Endothelial cell of umbilical vein (primary cell): ENCODE measurements at regions of chr3 and their contacts with region 1.

Region 1: DNA sequence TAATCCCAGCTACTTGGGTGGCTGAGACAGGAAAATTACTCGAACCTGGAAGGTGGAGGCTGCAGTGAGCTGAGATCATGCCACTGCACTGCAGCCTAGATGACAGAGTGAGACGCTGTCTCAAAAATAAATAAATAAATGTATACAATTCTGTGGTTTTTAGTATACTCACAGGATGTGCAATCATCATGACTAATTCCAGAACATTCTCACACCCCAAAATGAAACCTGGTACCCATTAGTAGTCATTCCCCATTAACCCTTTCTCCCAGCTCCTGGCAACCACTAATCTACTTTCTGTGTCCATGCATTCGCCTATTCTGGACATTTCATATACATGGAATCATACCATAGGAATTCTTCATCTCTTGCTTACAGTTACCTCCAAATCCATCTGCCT is 44.5 kb downstream of the LRRFIP2 start:
- DNase-seq: peak; percentile 39
- H3K4me3 ChIP-seq: no peak overlapping the region
- H3K27ac ChIP-seq: no peak overlapping the region
- H3K4me1 ChIP-seq: peaks cover 37% of the 10 kb centered on the region
- H3K27me3 ChIP-seq: no peaks in the 10 kb centered on the region
- CTCF ChIP-seq: no peak
- POLR2A ChIP-seq: no peak

Region 2: DNA sequence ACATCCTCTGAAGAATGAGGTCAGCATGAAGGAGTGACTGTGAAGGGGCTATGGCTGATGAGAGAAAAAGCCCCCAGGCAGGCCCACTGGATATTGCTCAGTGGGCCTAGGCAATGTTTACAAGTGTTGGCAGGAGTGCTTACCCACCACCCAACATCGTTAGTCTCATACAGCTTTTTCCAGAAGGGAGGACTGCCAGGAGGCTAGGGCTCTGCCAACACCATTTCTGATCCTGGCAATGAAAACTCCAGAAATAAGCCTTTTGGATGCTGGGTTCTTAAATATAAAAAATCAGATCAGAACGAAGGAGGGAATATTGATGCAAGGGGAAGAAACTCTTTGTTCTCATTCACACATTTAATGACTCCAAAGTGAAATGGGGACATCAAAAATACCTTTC is 554.6 kb before region 1 on chr3:
- CTCF ChIA-PET with region 1: no interaction called
- POLR2A ChIA-PET with region 1: no interaction called
- dilution Hi-C with region 1: no loop called
- intact Hi-C with region 1: no loop called
- DNase-seq: no peak
- H3K4me3 ChIP-seq: no peak overlapping the region
- H3K27ac ChIP-seq: no peak overlapping the region
- H3K4me1 ChIP-seq: no peaks in the 10 kb centered on the region
- H3K27me3 ChIP-seq: no peaks in the 10 kb centered on the region
- CTCF ChIP-seq: no peak
- POLR2A ChIP-seq: no peak

Region 3: DNA sequence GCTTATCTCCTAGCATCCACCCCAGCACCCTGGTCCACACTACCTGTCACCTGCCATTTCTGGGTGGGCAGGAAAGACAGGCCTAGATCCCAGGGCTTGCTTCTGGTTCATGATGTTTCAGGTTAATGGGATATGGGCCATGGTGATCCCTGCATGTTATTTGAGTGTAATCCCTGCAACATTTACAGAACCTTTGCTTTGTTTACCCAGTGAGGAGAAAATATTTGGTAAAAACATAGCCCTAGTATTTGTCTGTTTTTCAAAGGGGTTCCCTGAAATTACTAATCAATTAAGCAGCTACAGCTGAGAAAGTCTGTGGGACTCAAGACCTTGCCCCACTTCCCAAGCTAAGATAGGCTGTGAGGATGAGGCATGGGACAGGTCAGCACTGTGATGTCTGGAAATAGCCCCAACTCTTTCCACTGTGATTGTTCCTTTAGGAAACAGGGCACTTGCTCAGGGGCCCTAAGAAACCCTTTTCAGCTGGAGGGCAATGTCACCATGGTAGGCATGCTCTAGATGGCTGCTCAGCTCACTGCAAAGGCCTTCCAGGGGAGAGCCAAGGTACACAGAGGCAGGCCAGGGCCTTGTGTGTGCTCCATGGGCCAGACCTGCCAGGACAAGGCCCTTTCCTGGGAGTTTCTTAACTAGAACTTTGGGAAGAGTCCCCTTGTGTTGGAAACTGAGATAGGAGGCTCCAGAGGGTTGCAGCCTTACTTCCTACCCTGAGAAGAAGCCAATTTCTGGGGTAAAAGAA is 196.2 kb before region 1 on chr3:
- CTCF ChIA-PET with region 1: no interaction called
- POLR2A ChIA-PET with region 1: no interaction called
- dilution Hi-C with region 1: no loop called
- intact Hi-C with region 1: no loop called
- DNase-seq: no peak
- H3K4me3 ChIP-seq: no peak overlapping the region
- H3K27ac ChIP-seq: no peak overlapping the region
- H3K4me1 ChIP-seq: peaks cover 3% of the 10 kb centered on the region
- H3K27me3 ChIP-seq: no peaks in the 10 kb centered on the region
- CTCF ChIP-seq: no peak
- POLR2A ChIP-seq: no peak

Region 4: DNA sequence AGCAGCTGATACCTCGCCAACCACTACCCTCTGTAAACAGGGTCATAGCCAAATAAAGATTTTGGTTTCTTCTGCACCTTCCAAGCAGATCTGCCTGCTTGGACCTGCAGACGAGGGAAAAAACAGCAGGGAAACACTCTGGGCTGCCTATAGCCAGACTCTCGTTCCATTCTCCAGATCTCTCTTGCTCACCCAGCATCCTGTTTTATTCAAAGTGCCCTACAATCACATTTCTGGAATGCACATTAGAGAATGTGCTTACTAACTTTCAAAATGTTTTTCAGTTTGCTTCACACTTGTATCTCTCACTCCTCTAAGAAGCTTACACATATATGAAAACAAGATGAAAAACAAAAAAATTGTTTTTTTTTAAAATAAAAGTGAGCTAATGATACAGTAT is 65.1 kb before region 1 on chr3:
- CTCF ChIA-PET with region 1: no interaction called
- POLR2A ChIA-PET with region 1: no interaction called
- dilution Hi-C with region 1: no loop called
- intact Hi-C with region 1: loop called (anchors 5 kb)
- DNase-seq: no peak
- H3K4me3 ChIP-seq: no peak overlapping the region
- H3K27ac ChIP-seq: no peak overlapping the region
- H3K4me1 ChIP-seq: peaks cover 5% of the 10 kb centered on the region
- H3K27me3 ChIP-seq: no peaks in the 10 kb centered on the region
- CTCF ChIP-seq: no peak
- POLR2A ChIP-seq: no peak

Region 5: DNA sequence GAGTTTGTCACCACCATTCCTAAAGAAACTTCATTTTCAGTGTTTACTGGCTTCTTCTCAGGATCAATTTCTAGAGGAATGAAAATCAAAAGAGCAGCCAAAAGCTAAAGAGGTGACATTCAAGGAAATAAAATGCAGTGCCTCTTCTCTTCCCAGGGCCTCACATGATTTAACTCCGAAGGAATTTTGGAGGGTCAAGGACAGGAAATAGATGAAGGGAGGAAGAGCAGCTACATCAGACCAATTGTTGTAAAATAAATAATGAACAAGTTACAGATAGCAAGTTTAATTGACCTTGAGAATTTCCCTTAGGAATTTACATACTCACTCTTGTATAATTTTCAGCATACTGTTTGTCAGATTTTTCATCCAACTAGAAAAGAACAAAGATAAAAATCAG is 33.6 kb before region 1 on chr3:
- CTCF ChIA-PET with region 1: no interaction called
- POLR2A ChIA-PET with region 1: interaction called, 3 read pairs
- dilution Hi-C with region 1: no loop called
- intact Hi-C with region 1: loop called (anchors 5 kb)
- DNase-seq: peak; percentile 76
- H3K4me3 ChIP-seq: no peak overlapping the region
- H3K27ac ChIP-seq: peak overlapping the region; percentile 55
- H3K4me1 ChIP-seq: peaks cover 37% of the 10 kb centered on the region
- H3K27me3 ChIP-seq: no peaks in the 10 kb centered on the region
- CTCF ChIP-seq: no peak
- POLR2A ChIP-seq: no peak

Region 6: DNA sequence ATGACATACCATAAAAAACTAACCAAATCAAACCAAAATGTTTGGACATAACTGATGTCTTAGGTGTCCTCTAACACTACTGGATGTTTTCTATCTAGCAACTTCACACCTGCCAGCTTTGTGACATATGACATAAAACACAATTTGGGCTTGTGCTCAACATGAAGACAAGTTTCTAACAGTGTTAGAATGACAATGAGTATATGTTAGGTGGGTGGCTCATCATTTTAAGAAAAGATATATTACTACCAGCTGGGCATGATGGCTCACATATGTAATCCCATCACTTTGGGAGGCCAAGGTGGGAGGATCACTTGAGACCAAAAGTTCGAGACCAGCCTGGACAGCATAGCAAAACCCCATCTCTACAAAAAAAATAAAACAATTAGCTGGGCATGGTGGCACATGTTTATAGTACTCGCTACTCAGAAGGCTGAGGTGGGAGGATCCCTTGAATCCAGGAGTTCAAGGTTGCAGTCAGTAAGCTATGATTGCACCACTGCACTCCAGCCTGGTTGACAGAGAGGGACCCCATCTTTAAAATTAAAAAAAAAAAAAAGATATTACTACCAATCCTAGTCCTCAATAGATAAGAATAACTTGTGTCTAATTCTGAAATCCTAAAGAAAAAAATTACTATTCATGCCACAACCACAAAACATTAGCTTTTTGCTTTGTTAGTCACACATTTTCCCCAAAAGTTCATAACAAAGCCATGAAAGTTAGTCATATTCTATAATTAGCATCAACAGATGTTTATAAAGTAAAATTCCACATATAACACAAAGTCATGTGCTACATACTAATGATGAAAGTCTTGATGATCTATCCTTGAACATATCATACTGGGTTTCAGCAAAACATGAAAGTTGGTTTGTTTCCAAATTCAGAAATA is 15.4 kb before region 1 on chr3:
- CTCF ChIA-PET with region 1: interaction called, 4 read pairs
- POLR2A ChIA-PET with region 1: no interaction called
- dilution Hi-C with region 1: no loop called
- intact Hi-C with region 1: loop called (anchors 2 kb)
- DNase-seq: peak; percentile 82
- H3K4me3 ChIP-seq: no peak overlapping the region
- H3K27ac ChIP-seq: peak overlapping the region; percentile 48
- H3K4me1 ChIP-seq: peaks cover 19% of the 10 kb centered on the region
- H3K27me3 ChIP-seq: no peaks in the 10 kb centered on the region
- CTCF ChIP-seq: no peak
- POLR2A ChIP-seq: no peak

Region 7: GRCh38 chr3:37198996-37199395 is 69.1 kb after region 1 on chr3:
- CTCF ChIA-PET with region 1: no interaction called
- POLR2A ChIA-PET with region 1: no interaction called
- dilution Hi-C with region 1: no loop called
- intact Hi-C with region 1: no loop called
- DNase-seq: no peak
- H3K4me3 ChIP-seq: no peak overlapping the region
- H3K27ac ChIP-seq: no peak overlapping the region
- H3K4me1 ChIP-seq: no peaks in the 10 kb centered on the region
- H3K27me3 ChIP-seq: no peaks in the 10 kb centered on the region
- CTCF ChIP-seq: no peak
- POLR2A ChIP-seq: no peak

Region 8: GRCh38 chr3:37417297-37418082 is 287.6 kb after region 1 on chr3:
- CTCF ChIA-PET with region 1: no interaction called
- POLR2A ChIA-PET with region 1: no interaction called
- dilution Hi-C with region 1: no loop called
- intact Hi-C with region 1: no loop called
- DNase-seq: no peak
- H3K4me3 ChIP-seq: no peak overlapping the region
- H3K27ac ChIP-seq: no peak overlapping the region
- H3K4me1 ChIP-seq: no peaks in the 10 kb centered on the region
- H3K27me3 ChIP-seq: no peaks in the 10 kb centered on the region
- CTCF ChIP-seq: no peak
- POLR2A ChIP-seq: no peak